ENCODE measurements at regions of chr1 and their contacts with region 1.

Region 1: GRCh38 chr1:240602189-240602588 is 9.8 kb downstream of the GREM2 start:
- DNase-seq: peak; percentile 33
- ATAC-seq: peak; percentile 40; the same call in 1 of the 2 replicates
- H3K4me3 ChIP-seq: no peak overlapping the region
- H3K27ac ChIP-seq: no peak overlapping the region
- H3K4me1 ChIP-seq: peaks cover 2% of the 10 kb centered on the region; the same call in 1 of the 2 replicates
- H3K27me3 ChIP-seq: peaks cover 4% of the 10 kb centered on the region; the same call in 1 of the 2 replicates
- CTCF ChIP-seq: peak; percentile 57; the same call in 1 of the 2 replicates

Region 2: DNA sequence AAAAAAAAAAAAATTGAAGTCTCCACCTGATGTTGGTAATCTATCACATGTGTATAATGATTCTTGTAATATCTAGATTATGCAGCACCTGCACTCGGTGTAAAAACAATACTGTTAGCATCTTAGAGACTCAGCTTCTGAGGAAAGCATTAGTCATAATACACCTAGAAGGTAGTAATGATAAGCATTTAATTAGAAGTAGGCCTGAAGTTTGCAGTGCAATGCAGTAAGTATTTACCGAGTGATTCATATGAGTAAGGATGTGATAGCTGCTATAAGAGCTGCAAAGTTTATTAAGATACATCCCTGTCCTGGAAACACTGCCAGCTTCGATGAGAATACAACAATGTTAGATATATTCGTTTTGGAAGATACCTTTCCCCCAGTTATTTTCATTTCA is 186.7 kb before region 1 on chr1:
- CTCF ChIA-PET with region 1: no interaction called
- POLR2A ChIA-PET with region 1: no interaction called
- intact Hi-C with region 1: no loop called
- DNase-seq: peak; percentile 85
- ATAC-seq: peak; percentile 99
- H3K4me3 ChIP-seq: peak overlapping the region; percentile 35; the same call in 1 of the 2 replicates
- H3K27ac ChIP-seq: peak overlapping the region; percentile 57
- H3K4me1 ChIP-seq: peaks cover 25% of the 10 kb centered on the region
- H3K27me3 ChIP-seq: no peaks in the 10 kb centered on the region
- CTCF ChIP-seq: no peak

Region 3: GRCh38 chr1:240455228-240455821 is 146.9 kb before region 1 on chr1:
- CTCF ChIA-PET with region 1: interaction called, 3 read pairs
- POLR2A ChIA-PET with region 1: no interaction called
- intact Hi-C with region 1: loop called (anchors 1 kb)
- DNase-seq: peak; percentile 54
- ATAC-seq: peak; percentile 77
- H3K4me3 ChIP-seq: no peak overlapping the region
- H3K27ac ChIP-seq: no peak overlapping the region
- H3K4me1 ChIP-seq: no peaks in the 10 kb centered on the region
- H3K27me3 ChIP-seq: no peaks in the 10 kb centered on the region
- CTCF ChIP-seq: peak; percentile 82

Region 4: DNA sequence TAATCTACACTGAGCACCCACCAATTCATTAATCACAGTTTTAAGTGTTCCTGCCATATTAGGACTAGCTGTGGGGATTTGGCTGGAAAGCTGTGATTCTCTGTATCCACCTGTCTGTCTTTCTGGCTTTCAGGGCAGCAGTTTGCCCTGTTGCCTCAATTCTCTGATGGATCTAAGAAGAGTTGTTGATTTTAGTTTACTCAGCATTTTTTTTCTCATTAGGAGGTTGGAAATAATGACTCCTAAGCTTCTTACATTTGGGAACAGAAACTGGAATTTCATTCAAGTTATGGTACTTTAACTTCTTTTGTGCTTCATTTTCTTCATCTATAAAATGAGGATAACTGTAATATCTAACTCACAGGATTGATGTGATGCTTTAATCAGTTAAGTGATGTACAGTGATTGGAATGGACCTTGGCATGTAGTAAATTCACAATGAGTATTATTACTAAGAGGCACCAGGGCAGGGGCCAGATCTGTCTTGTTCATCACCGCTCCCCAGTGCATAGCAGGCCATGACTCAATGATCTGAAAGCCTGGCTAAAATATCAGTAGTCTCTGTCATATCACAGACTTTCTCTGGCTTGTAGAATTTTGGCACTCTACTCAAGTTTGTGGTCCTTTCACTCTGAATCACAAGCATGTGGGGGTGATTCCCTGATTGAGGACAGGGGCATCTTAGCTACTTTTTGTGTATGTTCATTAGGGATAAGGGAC is 61.1 kb after region 1 on chr1:
- CTCF ChIA-PET with region 1: no interaction called
- POLR2A ChIA-PET with region 1: no interaction called
- intact Hi-C with region 1: no loop called
- DNase-seq: no peak
- ATAC-seq: no peak
- H3K4me3 ChIP-seq: no peak overlapping the region
- H3K27ac ChIP-seq: no peak overlapping the region
- H3K4me1 ChIP-seq: peaks cover 2% of the 10 kb centered on the region; the same call in 1 of the 2 replicates
- H3K27me3 ChIP-seq: peaks cover 29% of the 10 kb centered on the region
- CTCF ChIP-seq: no peak

Region 5: GRCh38 chr1:240706150-240706935 is 104.2 kb after region 1 on chr1:
- CTCF ChIA-PET with region 1: no interaction called
- POLR2A ChIA-PET with region 1: no interaction called
- intact Hi-C with region 1: no loop called
- DNase-seq: peak; percentile 21
- ATAC-seq: no peak
- H3K4me3 ChIP-seq: no peak overlapping the region
- H3K27ac ChIP-seq: no peak overlapping the region
- H3K4me1 ChIP-seq: no peaks in the 10 kb centered on the region
- H3K27me3 ChIP-seq: peaks cover 73% of the 10 kb centered on the region
- CTCF ChIP-seq: no peak

Measured in PC-3 (cell line).